Posterior cingulate gyrus (tissue), 11 donors: ENCODE measurements at regions of chr13 and their contacts with region 1.

Region 1: DNA sequence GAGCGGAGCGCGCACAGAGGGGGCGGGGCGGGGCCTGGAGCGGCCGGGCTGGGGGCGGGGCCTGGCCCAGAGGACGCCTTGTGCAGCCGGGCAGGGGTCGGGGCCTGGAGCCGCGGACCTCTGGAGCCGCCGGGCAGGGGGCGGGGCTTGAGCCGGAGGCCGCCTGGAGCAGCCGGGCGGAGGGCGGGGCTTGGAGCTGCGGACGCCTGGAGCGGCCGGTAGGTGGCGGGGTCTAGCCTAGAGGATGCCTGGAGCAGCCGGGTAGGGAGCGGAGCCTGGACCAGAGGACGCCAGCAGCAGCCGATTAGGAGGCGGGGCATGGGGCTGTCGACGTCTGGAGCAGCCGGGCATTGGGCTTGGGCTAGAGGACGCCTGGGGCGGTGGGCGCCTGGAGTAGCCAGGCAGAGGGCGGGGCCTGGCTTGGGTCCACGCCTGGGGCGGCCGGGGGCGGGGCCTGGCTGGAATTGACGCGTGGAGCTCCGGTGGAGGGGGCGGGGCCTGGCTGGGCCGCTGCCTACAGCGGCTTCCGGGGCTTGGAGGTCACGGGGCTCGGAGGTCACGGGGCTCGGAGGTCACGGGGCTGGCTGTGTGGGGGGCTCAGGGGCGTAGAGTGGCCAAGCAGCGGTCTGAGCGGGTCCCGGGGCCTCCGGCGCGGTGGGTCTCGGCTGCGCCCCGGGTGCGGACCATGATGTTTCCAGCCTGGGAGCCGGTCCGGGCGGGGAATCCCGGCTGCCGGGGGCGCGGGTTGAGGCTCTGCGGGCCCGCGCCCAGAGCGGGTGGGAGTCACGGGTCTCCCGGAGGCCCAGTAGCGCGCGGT is at the start of gene ANKRD10:
- DNase-seq: peak; percentile 94 to 100 (median 98)

Region 2: GRCh38 chr13:110615322-110616102 is 299.8 kb before region 1 on chr13 and contains the start of gene NAXD:
- intact Hi-C with region 1: loop called (anchors 10 kb)
- DNase-seq: peak; percentile 90 to 99 (median 96)

Region 3: DNA sequence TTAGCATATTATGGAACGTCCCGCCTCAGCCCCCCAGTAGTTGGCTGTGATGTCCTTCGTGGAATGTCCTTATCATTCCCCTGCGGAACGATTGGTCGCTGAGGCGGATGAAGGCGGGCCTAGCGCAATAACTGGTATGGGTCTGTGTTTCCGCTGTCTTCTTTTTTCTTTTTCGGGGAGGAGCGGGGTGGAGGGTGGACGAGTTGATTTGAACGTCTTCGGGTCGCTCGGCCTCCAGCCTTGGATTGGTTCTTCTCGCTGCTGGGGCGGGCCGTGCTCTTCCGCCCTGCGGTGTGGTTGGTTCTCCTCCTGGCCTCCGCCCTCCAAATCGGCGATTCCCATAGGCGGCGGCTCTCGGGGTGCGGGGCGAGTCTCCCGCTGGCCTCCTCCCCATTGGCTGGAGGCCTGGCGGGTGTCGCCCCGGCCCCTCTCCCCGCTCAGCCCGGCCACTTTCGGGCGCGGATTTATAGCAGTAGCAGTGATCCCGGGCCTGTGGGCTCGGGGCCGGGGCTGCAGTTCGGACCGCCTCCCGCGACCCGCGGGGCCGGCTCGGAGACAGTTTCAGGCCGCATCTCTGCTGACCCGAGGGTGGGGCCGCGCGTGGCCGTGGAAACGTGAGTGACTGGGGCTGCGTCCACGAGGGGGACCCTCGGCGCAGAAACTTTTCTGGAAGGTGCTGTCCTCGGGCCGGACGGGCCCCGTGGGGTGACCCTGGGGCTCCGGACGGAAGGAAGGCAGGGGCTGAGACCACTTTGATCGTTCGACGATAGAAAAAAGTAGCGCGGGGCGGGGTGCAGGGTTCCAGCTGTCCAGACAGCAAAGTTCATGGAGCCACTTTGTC is 199.7 kb before region 1 on chr13:
- intact Hi-C with region 1: loop called (anchors 2 kb)
- DNase-seq: peak; percentile 94 to 100 (median 98)

Region 4: DNA sequence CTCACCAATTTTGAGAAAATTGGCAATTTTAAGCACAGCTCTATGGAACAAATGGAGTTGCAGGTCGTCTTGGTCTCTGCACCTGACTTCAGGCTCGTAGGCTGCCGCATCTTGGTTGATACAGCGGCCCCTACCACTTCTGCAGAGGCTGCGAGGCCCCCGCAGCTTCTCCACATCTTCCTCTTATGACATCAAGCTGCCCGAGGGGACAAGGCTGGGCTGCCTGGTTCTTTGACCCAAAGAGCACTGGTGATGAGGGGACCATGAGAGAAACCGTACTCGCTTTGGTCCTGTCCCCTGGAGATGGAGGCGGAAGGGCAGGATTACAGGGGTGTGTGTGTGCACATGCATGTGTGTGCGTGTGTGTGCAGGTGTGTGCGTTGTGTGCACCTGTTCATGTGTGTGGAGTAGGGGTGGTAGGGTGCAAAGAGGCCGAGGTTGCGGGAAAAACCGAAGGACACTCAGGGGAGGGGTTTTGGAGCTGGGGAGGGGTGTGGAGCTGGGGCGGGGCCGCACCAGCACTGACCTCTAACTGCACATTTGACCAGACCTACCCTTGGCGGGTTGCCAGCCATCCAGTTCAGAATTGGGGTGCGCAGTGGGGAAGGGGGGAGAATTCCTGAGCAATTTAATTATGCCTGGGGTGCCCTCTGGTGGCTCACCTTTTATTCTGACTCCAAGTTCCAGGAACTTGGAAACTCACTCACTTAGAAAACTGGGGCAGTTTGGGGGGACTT is 134.7 kb after region 1 on chr13:
- intact Hi-C with region 1: loop called (anchors 1 kb)
- DNase-seq: peak in 5 of 10 donors; percentile 31 to 78 (median 37)

Region 5: DNA sequence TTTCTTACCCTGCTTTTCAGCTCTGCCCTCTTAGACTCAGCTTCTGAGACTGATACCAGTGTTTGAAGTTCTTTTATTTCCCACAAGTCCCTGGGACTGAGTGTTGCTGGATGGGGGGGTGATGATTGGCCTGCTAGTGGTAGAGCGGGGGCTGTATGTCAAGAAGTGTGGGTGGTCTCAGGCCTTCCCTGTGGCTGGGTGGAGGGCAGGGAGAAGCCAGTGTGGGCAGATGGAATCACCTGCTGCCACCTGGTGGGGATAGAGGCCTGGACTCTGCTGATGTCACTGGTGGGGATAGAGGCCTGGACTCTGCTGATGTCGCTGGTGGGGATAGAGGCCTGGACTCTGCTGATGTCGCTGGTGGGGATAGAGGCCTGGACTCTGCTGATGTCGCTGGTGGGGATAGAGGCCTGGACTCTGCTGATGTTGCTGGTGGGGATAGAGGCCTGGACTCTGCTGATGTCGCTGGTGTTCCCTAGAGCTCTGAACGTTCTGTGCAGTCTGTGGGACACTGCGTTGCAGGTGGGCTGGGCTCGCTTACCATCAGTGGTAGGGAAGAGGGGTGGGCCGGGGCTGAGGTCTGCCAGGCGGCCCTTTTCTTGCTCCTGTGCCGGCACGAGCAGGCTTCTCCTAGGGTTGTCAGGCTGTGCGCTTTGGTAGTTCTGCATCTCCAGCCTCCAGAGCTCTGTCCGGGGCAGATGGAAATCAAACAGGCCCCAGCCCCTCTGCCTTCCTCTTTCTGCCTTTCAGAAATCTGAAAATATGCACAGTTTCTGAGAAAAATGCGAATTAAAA is 301.1 kb after region 1 on chr13:
- intact Hi-C with region 1: loop called (anchors 10 kb)
- DNase-seq: peak in 4 of 10 donors; percentile 39 to 91 (median 60)

Region 6: GRCh38 chr13:111539791-111540446 is 624.7 kb after region 1 on chr13:
- intact Hi-C with region 1: no loop called
- DNase-seq: peak in 2 of 10 donors; percentile 61 to 69